ENCODE measurements at regions of chr1 and their contacts with region 1.

Region 1: GRCh38 chr1:183655562-183656075 is 2.5 kb upstream of the APOBEC4 start:
- DNase-seq: peak; percentile 77

Region 2: GRCh38 chr1:183368202-183369108 is 287.2 kb before region 1 on chr1:
- in situ Hi-C with region 1: no loop called
- DNase-seq: no peak

Region 3: DNA sequence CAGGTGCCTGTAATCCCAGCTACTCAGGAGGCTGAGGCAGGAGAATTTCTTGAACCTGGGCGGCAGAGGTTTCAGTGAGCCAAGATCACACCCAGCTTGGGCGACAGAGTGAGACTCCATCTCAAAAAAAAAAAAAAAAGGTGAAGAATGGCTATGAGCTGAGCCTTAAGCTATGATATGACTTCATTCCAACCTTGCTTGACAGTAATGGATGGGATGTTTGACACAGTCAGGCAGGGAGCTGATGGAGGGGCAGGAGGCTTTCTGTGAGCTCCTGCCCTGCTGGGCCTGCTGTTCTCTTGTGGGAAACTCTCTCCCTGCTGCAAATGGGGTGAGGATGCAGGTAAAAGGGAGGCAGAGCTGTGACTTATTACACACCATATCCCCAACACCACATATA is 92.9 kb before region 1 on chr1:
- in situ Hi-C with region 1: no loop called
- DNase-seq: no peak

Region 4: DNA sequence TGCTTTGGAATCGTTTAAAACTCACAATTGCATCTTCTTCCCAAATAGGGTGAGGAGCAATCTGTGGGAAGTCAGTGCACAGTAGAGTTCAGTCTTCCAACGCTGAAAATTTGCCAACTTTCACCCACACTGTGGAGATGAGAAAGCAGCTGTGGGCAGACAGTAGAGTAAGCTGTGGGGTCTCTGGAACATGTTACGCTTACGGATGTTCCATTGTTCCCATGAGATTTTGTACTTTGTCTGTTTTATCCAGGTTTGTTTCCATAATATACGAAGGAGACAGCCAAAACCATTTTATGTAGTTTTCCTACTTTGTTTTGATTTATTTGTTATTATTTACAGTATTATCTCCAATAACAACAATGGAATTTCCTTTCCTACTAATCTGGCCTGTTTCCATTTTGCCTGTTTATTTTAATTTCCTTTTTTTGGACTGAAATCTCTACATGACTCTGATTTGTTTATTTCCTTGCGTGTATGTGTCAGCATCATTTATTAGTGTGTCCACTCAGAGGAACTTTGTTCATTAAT is 84.2 kb after region 1 on chr1:
- in situ Hi-C with region 1: no loop called
- DNase-seq: no peak

Region 5: GRCh38 chr1:183915625-183916510 is 260.2 kb after region 1 on chr1:
- in situ Hi-C with region 1: loop called (anchors 25 kb)
- DNase-seq: peak; percentile 79

Measured in KBM-7 (cell line).